H1 (cell line): ENCODE measurements at regions of chr1 and their contacts with region 1.

Region 1: DNA sequence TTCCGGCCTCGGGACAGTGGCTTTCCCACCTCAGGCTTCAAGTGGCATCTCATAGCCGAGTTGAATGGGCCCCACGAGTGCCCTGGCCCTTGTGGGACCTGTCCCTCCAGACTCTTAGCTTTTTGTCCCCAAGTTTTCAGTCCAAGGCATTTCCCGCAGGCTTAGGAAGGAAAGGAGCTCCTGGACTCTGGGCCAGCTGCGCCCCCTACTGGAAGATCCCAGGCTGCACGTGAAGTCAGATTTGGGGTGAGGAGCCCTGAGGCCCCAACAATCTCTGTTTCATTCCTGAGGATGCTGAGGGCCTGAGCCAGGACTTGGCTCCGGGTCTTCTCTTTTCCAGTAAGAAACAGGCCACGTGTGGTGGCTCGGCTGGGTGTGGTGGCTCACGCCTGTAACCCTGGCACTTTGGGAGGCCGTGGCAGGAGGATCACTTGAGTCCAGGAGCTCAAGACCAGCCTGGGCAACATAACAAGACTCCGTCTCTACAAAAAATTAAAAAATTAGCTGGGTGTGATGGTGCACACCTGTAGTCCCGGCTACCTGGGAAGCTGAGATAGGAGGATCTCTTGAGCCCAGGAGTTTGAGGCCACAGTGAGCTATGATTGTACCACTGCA is 67.4 kb downstream of the ARHGEF10L start:
- DNase-seq: peak; percentile 47 to 94
- H3K4me3 ChIP-seq: no peak overlapping the region
- H3K27ac ChIP-seq: no peak overlapping the region
- H3K4me1 ChIP-seq: 0 out of 7 replicates have a peak, but pooled peaks cover 0 to 2% (median 0%) of the 10 kb centered on the region in 4 experiments
- H3K27me3 ChIP-seq: no peaks in the 10 kb centered on the region
- CTCF ChIP-seq: peak; percentile 93 to 96 (median 95)
- EP300 ChIP-seq: no peak
- POLR2A ChIP-seq: no peak
- RAD21 ChIP-seq: peak; percentile 96 to 97

Region 2: GRCh38 chr1:17494114-17494729 is 112.7 kb before region 1 on chr1:
- CTCF ChIA-PET with region 1: interaction called, 111 read pairs
- POLR2A ChIA-PET with region 1: interaction called, 5 read pairs
- DNase-seq: peak; percentile 89 to 96
- H3K4me3 ChIP-seq: no peak overlapping the region
- H3K27ac ChIP-seq: no peak overlapping the region
- H3K4me1 ChIP-seq: no peaks in the 10 kb centered on the region
- H3K27me3 ChIP-seq: no peaks in the 10 kb centered on the region
- CTCF ChIP-seq: peak; percentile 98 to 100 (median 99)
- EP300 ChIP-seq: 0 out of 3 replicates have a peak, but pooled peaks of 1 of the 2 experiments have one; percentile 40
- POLR2A ChIP-seq: no peak
- RAD21 ChIP-seq: peak; percentile 100

Region 3: GRCh38 chr1:17531682-17532487 is 75.0 kb before region 1 on chr1:
- CTCF ChIA-PET with region 1: interaction called, 1,640 read pairs
- POLR2A ChIA-PET with region 1: no interaction called
- DNase-seq: no peak
- H3K4me3 ChIP-seq: no peak overlapping the region
- H3K27ac ChIP-seq: no peak overlapping the region
- H3K4me1 ChIP-seq: peaks cover 0 to 16% (median 10%) of the 10 kb centered on the region in 4 experiments; a peak in 5 of 7 replicates
- H3K27me3 ChIP-seq: no peaks in the 10 kb centered on the region
- CTCF ChIP-seq: no peak
- EP300 ChIP-seq: no peak
- POLR2A ChIP-seq: no peak
- RAD21 ChIP-seq: no peak

Region 4: DNA sequence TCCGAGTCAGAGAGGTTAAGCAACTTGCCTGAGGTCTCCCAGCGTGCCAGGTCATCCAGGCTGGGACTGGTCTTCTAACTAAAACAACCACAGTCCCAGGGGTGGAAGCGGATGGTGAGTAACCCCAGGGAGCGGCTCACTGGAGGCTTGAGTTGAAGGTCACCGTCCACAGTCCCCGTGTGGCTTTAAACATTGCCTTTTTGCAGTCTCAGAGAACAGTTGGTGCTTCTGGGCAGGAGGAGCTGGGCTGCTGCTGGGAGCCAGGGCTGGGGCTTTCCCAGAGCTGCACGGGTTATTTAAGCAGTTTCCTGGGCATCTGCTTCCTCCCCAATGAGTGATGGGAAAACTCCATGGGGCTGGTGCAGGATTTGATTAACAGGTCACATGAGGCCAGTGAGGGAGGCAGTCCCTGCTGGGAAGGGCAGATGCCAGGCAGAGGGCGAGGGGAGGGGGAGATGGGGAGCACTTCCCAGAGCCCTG is 55.1 kb before region 1 on chr1:
- CTCF ChIA-PET with region 1: interaction called, 28 read pairs
- POLR2A ChIA-PET with region 1: no interaction called
- DNase-seq: no peak
- H3K4me3 ChIP-seq: peak overlapping the region in 2 of 4 experiments; percentile 7 to 44; a peak in 3 of 8 replicates
- H3K27ac ChIP-seq: no peak overlapping the region; the same call in 1 of the 2 replicates
- H3K4me1 ChIP-seq: peaks cover 18 to 50% (median 37%) of the 10 kb centered on the region in 4 experiments
- H3K27me3 ChIP-seq: no peaks in the 10 kb centered on the region
- CTCF ChIP-seq: no peak
- EP300 ChIP-seq: no peak
- POLR2A ChIP-seq: no peak; a peak in 1 of 3 replicates
- RAD21 ChIP-seq: no peak

Region 5: GRCh38 chr1:17569200-17570161 is 37.5 kb before region 1 on chr1:
- CTCF ChIA-PET with region 1: interaction called, 612 read pairs
- POLR2A ChIA-PET with region 1: no interaction called
- DNase-seq: no peak
- H3K4me3 ChIP-seq: 0 out of 8 replicates have a peak overlapping the region, but pooled peaks of 1 of the 4 experiments have one; percentile 8
- H3K27ac ChIP-seq: peak overlapping the region; percentile 24; the same call in 1 of the 2 replicates
- H3K4me1 ChIP-seq: peaks cover 23 to 78% (median 60%) of the 10 kb centered on the region in 4 experiments
- H3K27me3 ChIP-seq: no peaks in the 10 kb centered on the region
- CTCF ChIP-seq: no peak
- EP300 ChIP-seq: no peak
- POLR2A ChIP-seq: no peak
- RAD21 ChIP-seq: no peak

Region 6: GRCh38 chr1:17617787-17618557 is 11.0 kb after region 1 on chr1:
- CTCF ChIA-PET with region 1: interaction called, 76 read pairs
- POLR2A ChIA-PET with region 1: no interaction called
- DNase-seq: no peak
- H3K4me3 ChIP-seq: no peak overlapping the region
- H3K27ac ChIP-seq: no peak overlapping the region
- H3K4me1 ChIP-seq: no peaks in the 10 kb centered on the region
- H3K27me3 ChIP-seq: no peaks in the 10 kb centered on the region
- CTCF ChIP-seq: peak in 1 of 3 experiments; percentile 1; a peak in 1 of 4 replicates
- EP300 ChIP-seq: no peak
- POLR2A ChIP-seq: no peak
- RAD21 ChIP-seq: no peak

Region 7: DNA sequence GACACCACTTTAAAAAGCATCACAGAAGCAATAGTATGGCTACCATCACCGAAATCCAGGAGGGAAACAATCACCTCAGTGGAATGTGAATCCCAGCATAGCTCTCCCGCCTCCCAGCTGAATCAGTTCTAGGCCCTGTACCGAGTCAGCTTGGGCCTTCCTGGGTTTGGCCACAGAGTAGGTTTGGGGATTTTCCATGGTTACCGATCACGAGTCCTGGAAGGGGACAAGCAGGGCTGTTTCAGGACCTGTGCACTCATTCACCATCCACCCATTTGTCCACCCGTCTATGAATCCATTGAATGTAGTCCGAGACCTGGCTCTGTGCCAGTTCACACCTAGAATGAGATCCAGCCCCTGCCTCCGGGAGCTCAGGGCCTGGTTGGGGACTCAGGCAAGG is 26.7 kb after region 1 on chr1:
- CTCF ChIA-PET with region 1: interaction called, 19 read pairs
- POLR2A ChIA-PET with region 1: no interaction called
- DNase-seq: no peak
- H3K4me3 ChIP-seq: no peak overlapping the region
- H3K27ac ChIP-seq: no peak overlapping the region
- H3K4me1 ChIP-seq: peaks cover 0 to 3% (median 0%) of the 10 kb centered on the region in 4 experiments; a peak in 1 of 7 replicates
- H3K27me3 ChIP-seq: no peaks in the 10 kb centered on the region
- CTCF ChIP-seq: no peak
- EP300 ChIP-seq: no peak
- POLR2A ChIP-seq: no peak
- RAD21 ChIP-seq: no peak

Region 8: GRCh38 chr1:17837233-17838030 is 230.5 kb after region 1 on chr1:
- CTCF ChIA-PET with region 1: no interaction called
- POLR2A ChIA-PET with region 1: no interaction called
- DNase-seq: no peak
- H3K4me3 ChIP-seq: no peak overlapping the region
- H3K27ac ChIP-seq: no peak overlapping the region
- H3K4me1 ChIP-seq: no peaks in the 10 kb centered on the region
- H3K27me3 ChIP-seq: no peaks in the 10 kb centered on the region
- CTCF ChIP-seq: no peak
- EP300 ChIP-seq: no peak
- POLR2A ChIP-seq: no peak
- RAD21 ChIP-seq: no peak